Endothelial cell of umbilical vein (primary cell): ENCODE measurements at regions of chr12 and their contacts with region 1.

Region 1: GRCh38 chr12:14664510-14664909 is 31.9 kb downstream of the GUCY2C start:
- DNase-seq: peak; percentile 57
- H3K4me3 ChIP-seq: no peak overlapping the region
- H3K27ac ChIP-seq: no peak overlapping the region
- H3K4me1 ChIP-seq: no peaks in the 10 kb centered on the region
- H3K27me3 ChIP-seq: peaks cover 0 to 2% of the 10 kb centered on the region in 2 experiments
- CTCF ChIP-seq: peak; percentile 27 to 32
- POLR2A ChIP-seq: no peak

Region 2: DNA sequence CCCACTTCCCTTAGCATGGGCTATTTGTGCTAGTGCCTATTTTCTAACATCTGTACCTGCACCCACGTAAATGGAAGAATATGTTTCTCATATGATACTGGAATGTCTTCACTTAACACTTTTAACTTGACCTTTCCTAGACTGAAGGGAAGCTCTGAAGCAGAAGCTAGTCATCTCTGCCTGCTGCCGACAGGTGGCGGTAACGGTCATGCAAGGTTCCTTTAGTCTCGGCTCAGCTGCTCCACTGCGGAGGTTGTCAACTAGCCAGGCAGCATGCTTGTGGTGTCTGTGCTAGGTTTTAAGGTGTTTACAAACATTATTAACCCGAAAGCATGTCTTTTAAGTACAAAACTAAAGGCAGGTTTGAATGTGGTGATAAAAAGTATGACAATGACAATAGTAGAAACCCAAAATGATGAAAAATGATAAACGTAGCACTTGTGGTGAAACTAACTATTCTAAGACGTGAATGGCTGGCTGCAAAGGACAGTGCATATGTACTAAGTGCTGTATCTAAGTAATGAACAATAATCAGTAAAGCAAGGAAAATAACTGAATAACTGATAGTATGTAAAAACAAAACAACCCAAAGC is 800.3 kb before region 1 on chr12:
- CTCF ChIA-PET with region 1: interaction called, 4 read pairs
- POLR2A ChIA-PET with region 1: no interaction called
- dilution Hi-C with region 1: no loop called
- intact Hi-C with region 1: loop called (anchors 10 kb)
- DNase-seq: peak; percentile 57
- H3K4me3 ChIP-seq: no peak overlapping the region
- H3K27ac ChIP-seq: no peak overlapping the region
- H3K4me1 ChIP-seq: no peaks in the 10 kb centered on the region
- H3K27me3 ChIP-seq: no peaks in the 10 kb centered on the region
- CTCF ChIP-seq: peak; percentile 86 to 95
- POLR2A ChIP-seq: no peak

Region 3: DNA sequence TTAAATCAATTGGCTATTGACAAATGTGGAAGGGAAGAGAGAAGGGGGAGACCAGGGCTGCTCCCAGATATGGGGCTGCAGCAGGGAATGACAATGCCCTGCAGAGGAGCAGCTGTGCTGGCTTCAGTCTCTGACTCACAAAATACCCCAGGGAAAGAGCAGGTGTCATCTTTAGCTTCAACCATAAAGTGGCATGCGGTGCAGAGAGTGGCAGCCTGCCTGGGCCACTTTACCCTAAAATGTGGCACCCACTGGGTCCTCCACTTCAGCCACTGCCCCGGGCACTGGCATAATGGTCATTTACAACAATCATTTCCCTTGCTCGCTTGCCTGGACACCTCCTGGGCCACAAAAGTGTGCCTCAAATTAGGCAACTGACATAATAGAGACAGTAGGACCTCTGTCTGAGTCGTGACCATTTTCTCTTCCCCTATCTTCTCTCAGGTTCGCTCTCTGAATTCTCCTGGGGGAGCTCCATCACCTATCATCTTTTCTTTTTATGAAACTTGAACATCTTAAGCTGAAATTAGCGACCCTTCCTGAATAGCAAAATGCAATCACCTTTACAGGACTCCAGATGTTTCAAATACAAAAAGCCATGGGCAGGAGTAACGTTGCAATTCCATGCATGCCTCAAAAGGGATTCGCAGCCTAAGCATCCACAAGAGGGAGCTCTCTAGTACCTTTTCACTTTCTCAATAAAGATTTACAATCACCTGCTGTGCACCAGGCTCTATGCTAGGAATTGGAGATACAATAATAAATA is 478.9 kb before region 1 on chr12:
- CTCF ChIA-PET with region 1: interaction called, 40 read pairs
- POLR2A ChIA-PET with region 1: no interaction called
- dilution Hi-C with region 1: no loop called
- intact Hi-C with region 1: no loop called
- DNase-seq: peak; percentile 35
- H3K4me3 ChIP-seq: no peak overlapping the region
- H3K27ac ChIP-seq: no peak overlapping the region
- H3K4me1 ChIP-seq: no peaks in the 10 kb centered on the region
- H3K27me3 ChIP-seq: no peaks in the 10 kb centered on the region
- CTCF ChIP-seq: peak; percentile 50 to 72
- POLR2A ChIP-seq: no peak

Region 4: DNA sequence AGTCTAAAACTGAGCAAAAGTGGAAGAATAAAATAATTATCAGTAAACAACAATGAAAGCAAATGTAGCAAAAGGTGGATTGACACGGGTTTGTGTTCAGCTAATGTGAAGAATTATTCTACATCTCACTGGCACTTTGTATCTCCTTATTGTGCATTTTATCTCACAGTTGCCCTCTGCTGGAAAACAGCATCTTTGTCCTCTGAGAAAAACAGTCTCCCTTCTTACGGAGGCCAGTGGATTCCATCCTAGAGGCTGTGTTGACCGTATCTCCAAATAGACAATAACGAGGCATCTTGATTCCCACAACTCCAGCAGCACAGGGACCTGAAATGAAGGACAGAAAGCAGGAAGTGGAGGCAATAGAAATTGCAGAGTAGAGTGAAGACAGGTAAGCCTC is 45.5 kb before region 1 on chr12:
- CTCF ChIA-PET with region 1: no interaction called
- POLR2A ChIA-PET with region 1: no interaction called
- dilution Hi-C with region 1: no loop called
- intact Hi-C with region 1: no loop called
- DNase-seq: peak; percentile 19
- H3K4me3 ChIP-seq: no peak overlapping the region
- H3K27ac ChIP-seq: no peak overlapping the region
- H3K4me1 ChIP-seq: no peaks in the 10 kb centered on the region
- H3K27me3 ChIP-seq: peaks cover 0 to 1% of the 10 kb centered on the region in 2 experiments
- CTCF ChIP-seq: peak in 1 of 2 donors; percentile 17
- POLR2A ChIP-seq: no peak

Region 5: GRCh38 chr12:14629832-14630710 is 34.4 kb before region 1 on chr12:
- CTCF ChIA-PET with region 1: interaction called, 5 read pairs
- POLR2A ChIA-PET with region 1: no interaction called
- dilution Hi-C with region 1: no loop called
- intact Hi-C with region 1: loop called (anchors 1 kb)
- DNase-seq: peak; percentile 70
- H3K4me3 ChIP-seq: no peak overlapping the region
- H3K27ac ChIP-seq: no peak overlapping the region
- H3K4me1 ChIP-seq: no peaks in the 10 kb centered on the region
- H3K27me3 ChIP-seq: peaks cover 2 to 6% of the 10 kb centered on the region in 2 experiments
- CTCF ChIP-seq: peak; percentile 86 to 91
- POLR2A ChIP-seq: no peak